ENCODE measurements at regions of chr1 and their contacts with region 1.

Region 1: GRCh38 chr1:20194757-20195461 is 8.6 kb upstream of the PLA2G2C start:
- DNase-seq: peak; percentile 88
- H3K4me3 Mint-ChIP-seq: no peak overlapping the region
- H3K27ac Mint-ChIP-seq: no peak overlapping the region
- H3K4me1 Mint-ChIP-seq: no peaks in the 10 kb centered on the region
- H3K27me3 Mint-ChIP-seq: peaks cover 2% of the 10 kb centered on the region

Region 2: DNA sequence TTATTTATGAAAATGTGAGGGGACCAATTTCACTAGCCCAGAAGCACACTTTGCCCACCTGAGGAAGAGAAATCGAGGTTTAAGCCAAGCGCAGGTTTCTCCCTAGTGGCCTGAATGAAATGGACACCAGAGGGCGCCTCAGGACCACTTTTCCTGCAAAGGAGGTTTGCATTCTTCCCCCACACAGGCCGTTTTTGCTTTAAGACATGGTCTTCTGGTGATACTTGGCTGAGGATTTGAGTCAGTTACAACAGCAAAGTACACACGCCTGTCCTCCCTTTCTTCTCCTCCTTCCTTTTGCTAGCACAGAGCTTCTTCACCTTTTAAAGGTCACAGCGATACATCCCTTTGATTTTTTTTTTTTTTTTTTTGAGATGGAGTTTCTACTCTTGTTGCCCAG is 276.9 kb before region 1 on chr1:
- CTCF ChIA-PET with region 1: interaction called, 6 read pairs
- intact Hi-C with region 1: loop called (anchors 1 kb)
- DNase-seq: peak; percentile 93
- H3K4me3 Mint-ChIP-seq: no peak overlapping the region
- H3K27ac Mint-ChIP-seq: no peak overlapping the region
- H3K4me1 Mint-ChIP-seq: no peaks in the 10 kb centered on the region
- H3K27me3 Mint-ChIP-seq: peaks cover 2% of the 10 kb centered on the region

Region 3: DNA sequence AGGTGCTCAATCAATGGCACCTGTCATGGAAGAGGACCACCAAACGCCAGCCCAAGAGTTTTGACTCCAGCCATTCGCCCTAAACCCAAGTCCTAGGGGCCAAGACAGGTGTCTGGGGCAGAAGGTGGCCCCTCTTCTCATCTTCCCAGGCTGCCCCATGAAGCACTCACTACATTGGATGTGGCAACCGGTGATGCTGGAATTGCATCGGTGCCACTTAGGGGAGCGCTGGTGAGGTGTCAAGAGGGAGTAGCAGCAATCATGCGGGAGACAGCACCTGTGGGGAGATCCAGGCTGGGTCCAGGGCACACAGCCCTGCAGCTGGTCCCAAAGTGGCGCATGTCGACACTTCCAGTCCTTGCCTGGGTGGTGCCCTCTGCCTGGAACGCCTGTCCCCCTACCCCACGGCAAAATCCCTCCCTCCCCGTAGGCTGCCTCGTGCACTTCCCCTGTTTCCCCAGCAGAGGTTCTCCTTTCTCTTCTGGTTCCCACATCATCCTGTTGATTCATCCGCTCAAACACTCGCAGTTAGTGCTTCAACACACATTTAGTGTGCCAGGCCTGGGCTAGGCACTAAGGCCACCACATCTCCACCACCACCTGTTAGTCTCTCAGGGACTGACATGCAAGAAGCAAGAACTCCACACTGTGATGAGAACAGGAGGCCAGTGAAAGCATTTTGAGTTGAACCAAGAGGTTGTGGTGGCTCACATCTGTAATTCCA is 94.1 kb before region 1 on chr1:
- CTCF ChIA-PET with region 1: interaction called, 5 read pairs
- intact Hi-C with region 1: loop called (anchors 1 kb)
- DNase-seq: peak; percentile 60
- H3K4me3 Mint-ChIP-seq: no peak overlapping the region
- H3K27ac Mint-ChIP-seq: no peak overlapping the region
- H3K4me1 Mint-ChIP-seq: peaks cover 8% of the 10 kb centered on the region
- H3K27me3 Mint-ChIP-seq: peaks cover 3% of the 10 kb centered on the region

Region 4: GRCh38 chr1:20151906-20152598 is 42.9 kb before region 1 on chr1:
- CTCF ChIA-PET with region 1: interaction called, 75 read pairs
- intact Hi-C with region 1: no loop called
- DNase-seq: peak; percentile 85
- H3K4me3 Mint-ChIP-seq: peak overlapping the region; percentile 62
- H3K27ac Mint-ChIP-seq: no peak overlapping the region
- H3K4me1 Mint-ChIP-seq: peaks cover 9% of the 10 kb centered on the region
- H3K27me3 Mint-ChIP-seq: no peaks in the 10 kb centered on the region

Region 5: GRCh38 chr1:20158358-20159067 is 36.4 kb before region 1 on chr1:
- CTCF ChIA-PET with region 1: interaction called, 75 read pairs
- intact Hi-C with region 1: loop called (anchors 1 kb)
- DNase-seq: peak; percentile 68
- H3K4me3 Mint-ChIP-seq: no peak overlapping the region
- H3K27ac Mint-ChIP-seq: no peak overlapping the region
- H3K4me1 Mint-ChIP-seq: peaks cover 7% of the 10 kb centered on the region
- H3K27me3 Mint-ChIP-seq: no peaks in the 10 kb centered on the region

Region 6: DNA sequence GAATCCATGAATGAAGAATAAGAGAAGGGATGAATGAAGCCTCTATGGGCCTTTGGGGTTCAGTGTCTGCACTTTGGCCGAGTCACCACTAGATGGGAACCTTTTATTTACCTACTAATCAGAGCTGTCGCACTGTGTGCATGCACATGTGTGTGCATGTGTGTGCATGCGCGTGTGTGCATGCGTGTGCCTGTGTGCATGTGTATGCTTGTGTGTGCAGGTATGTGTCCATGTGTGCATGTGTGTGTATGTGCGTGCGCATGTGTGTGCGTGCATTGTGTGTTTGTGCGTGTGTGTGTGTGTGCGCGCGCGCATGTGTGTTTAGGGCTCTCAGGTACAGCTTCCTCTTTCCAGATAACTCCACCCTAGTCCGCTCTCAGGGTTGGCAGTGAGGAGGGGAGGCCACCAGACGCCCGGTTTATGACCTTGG is 29.4 kb before region 1 on chr1:
- CTCF ChIA-PET with region 1: interaction called, 75 read pairs
- intact Hi-C with region 1: no loop called
- DNase-seq: peak; percentile 35
- H3K4me3 Mint-ChIP-seq: no peak overlapping the region
- H3K27ac Mint-ChIP-seq: no peak overlapping the region
- H3K4me1 Mint-ChIP-seq: no peaks in the 10 kb centered on the region
- H3K27me3 Mint-ChIP-seq: no peaks in the 10 kb centered on the region

Region 7: GRCh38 chr1:20174937-20175666 is 19.8 kb before region 1 on chr1:
- CTCF ChIA-PET with region 1: interaction called, 25 read pairs
- intact Hi-C with region 1: loop called (anchors 1 kb)
- DNase-seq: no peak
- H3K4me3 Mint-ChIP-seq: no peak overlapping the region
- H3K27ac Mint-ChIP-seq: peak overlapping the region; percentile 34
- H3K4me1 Mint-ChIP-seq: peaks cover 21% of the 10 kb centered on the region
- H3K27me3 Mint-ChIP-seq: no peaks in the 10 kb centered on the region

Region 8: DNA sequence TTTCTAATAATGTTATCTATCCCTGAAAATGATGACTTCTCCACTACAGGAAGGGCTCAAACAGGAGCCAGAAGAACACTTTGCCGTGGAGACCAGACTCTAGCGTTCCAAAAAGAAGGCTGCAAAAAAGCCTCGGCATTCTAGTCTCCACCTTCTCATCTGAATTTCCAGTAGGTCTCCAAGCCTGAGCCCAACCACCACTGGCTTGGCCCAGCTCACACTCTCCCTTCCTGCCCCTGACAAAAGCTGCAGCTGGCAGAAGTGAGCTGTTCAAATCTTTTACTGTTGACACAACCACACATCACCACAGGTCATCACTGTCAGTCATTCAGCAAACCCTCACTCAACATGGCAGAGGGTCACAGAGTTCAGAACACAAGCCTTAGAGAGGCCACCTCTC is 221.8 kb after region 1 on chr1:
- CTCF ChIA-PET with region 1: no interaction called
- intact Hi-C with region 1: no loop called
- DNase-seq: no peak
- H3K4me3 Mint-ChIP-seq: no peak overlapping the region
- H3K27ac Mint-ChIP-seq: no peak overlapping the region
- H3K4me1 Mint-ChIP-seq: no peaks in the 10 kb centered on the region
- H3K27me3 Mint-ChIP-seq: peaks cover 35% of the 10 kb centered on the region